HEK293 (cell line): ENCODE measurements at regions of chr2 and their contacts with region 1.

Region 1: DNA sequence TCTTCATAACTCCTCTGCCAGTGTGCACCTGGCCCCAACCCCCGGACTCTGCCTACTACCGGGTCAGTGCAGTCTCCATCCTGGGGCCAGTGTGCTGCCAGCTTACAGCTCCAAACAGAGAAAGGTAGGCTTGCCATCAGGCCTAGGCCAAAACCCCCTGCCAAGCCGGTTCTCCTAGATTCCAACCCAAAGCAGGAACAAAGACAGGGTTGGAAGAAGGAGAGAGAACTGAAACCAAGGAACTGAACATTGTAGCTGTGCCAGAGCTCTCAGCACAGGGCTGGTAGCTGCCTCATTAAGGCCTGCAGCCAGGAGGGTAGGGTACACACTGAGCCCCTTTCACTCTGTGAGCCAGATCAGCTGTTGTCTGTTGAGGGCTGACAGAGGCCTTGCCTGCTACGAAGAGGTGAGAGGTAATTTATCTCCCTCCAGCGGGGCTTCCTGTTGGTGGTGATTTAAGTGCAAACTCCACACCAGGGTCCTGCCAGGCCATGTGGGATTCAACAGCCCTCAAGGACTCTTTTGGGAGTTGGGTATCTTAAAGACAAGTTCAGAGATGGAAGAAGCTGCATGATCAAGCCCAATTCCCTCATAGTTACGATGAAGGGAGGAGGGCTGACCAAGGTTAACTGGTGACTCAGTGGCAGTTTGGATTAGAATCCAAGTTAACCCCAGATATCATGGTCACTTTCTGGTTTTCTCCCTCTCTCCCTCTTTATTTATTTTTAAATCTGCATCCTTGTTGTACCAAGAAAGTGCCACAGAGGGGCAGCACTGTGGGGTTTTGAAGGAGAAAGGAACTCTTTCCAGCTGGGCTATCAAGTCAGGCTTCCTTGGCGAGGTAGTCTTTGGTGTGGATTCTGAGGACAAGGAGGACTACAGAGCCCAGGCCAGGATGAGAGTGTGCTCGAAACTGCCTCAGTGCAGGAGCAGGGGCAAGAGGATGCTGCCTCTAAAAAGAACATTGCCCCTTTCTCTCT is 48.1 kb downstream of the CYRIA start:
- H3K4me3 ChIP-seq: no peak overlapping the region
- H3K27ac ChIP-seq: no peak overlapping the region
- H3K4me1 ChIP-seq: peaks cover 11% of the 10 kb centered on the region
- CTCF ChIP-seq: no peak

Region 2: GRCh38 chr2:16650287-16651249 is 33.0 kb after region 1 on chr2:
- CTCF ChIA-PET with region 1: interaction called, 10 read pairs
- POLR2A ChIA-PET with region 1: no interaction called
- H3K4me3 ChIP-seq: no peak overlapping the region
- H3K27ac ChIP-seq: no peak overlapping the region; the same call in 1 of the 2 replicates
- H3K4me1 ChIP-seq: no peaks in the 10 kb centered on the region
- CTCF ChIP-seq: no peak